ENCODE measurements at regions of chr2 and their contacts with region 1.

Region 1: GRCh38 chr2:99576775-99577174 is 87.0 kb upstream of the REV1 start:
- DNase-seq: no peak
- H3K4me3 ChIP-seq: no peak overlapping the region
- H3K27ac ChIP-seq: no peak overlapping the region
- H3K4me1 ChIP-seq: no peaks in the 10 kb centered on the region
- H3K27me3 ChIP-seq: no peaks in the 10 kb centered on the region
- CTCF ChIP-seq: no peak
- POLR2A ChIP-seq: no peak

Region 2: GRCh38 chr2:99670768-99671734 is 94.3 kb after region 1 on chr2:
- intact Hi-C with region 1: no loop called
- DNase-seq: no peak
- H3K4me3 ChIP-seq: no peak overlapping the region
- H3K27ac ChIP-seq: no peak overlapping the region
- H3K4me1 ChIP-seq: no peaks in the 10 kb centered on the region
- H3K27me3 ChIP-seq: no peaks in the 10 kb centered on the region
- CTCF ChIP-seq: no peak
- POLR2A ChIP-seq: no peak

Region 3: GRCh38 chr2:99900556-99900955 is 323.8 kb after region 1 on chr2:
- intact Hi-C with region 1: no loop called
- DNase-seq: no peak
- H3K4me3 ChIP-seq: no peak overlapping the region
- H3K27ac ChIP-seq: no peak overlapping the region
- H3K4me1 ChIP-seq: no peaks in the 10 kb centered on the region
- H3K27me3 ChIP-seq: no peaks in the 10 kb centered on the region
- CTCF ChIP-seq: no peak
- POLR2A ChIP-seq: no peak

Region 4: GRCh38 chr2:100242891-100243619 is 666.3 kb after region 1 on chr2:
- intact Hi-C with region 1: loop called (anchors 5 kb)
- DNase-seq: peak; percentile 39 to 72
- H3K4me3 ChIP-seq: no peak overlapping the region
- H3K27ac ChIP-seq: no peak overlapping the region
- H3K4me1 ChIP-seq: no peaks in the 10 kb centered on the region
- H3K27me3 ChIP-seq: no peaks in the 10 kb centered on the region
- CTCF ChIP-seq: peak; percentile 11 to 73 (median 52)
- POLR2A ChIP-seq: no peak

Measured in breast epithelium (tissue), 4 donors.